MCF 10A (cell line): ENCODE measurements at regions of chr3 and their contacts with region 1.

Region 1: DNA sequence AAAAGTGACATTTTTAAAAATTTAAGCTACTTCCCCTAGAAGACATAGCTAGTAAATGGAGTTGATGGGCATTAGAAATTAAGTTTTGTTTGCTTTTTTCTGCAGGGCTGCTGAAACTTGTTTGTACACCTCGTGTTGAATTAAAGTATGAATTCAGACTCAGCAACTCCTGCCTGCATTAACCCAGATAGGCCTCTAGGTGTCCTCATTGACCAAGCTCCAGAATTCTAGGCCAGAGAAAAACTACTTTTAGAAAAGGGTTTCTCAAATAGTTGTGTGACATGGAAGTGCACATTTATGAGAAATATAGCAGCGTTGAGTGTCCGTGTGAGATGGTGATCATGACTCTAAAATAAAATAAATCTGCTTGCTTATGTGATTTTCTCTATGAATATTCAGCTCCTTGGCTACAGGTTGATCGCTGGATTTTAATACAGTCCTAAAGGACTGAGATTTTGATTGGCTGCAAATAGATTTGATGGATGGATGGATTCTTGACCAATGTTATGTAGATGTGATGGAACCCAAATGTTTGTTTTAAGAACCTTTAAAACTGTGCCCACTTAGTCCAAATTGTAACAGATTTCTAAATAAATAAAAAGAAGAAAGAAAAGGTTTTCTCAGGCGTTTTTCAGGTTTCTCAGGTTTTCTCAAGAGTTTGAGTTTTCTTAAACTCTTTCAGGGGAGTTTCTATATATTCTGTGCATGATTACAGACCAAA is 39.4 kb upstream of the LMOD3 start:
- DNase-seq: peak; percentile 65
- H3K4me3 Mint-ChIP-seq: no peak overlapping the region
- H3K27ac Mint-ChIP-seq: no peak overlapping the region
- H3K4me1 Mint-ChIP-seq: no peaks in the 10 kb centered on the region
- H3K27me3 Mint-ChIP-seq: no peaks in the 10 kb centered on the region
- CTCF ChIP-seq: peak; percentile 88

Region 2: DNA sequence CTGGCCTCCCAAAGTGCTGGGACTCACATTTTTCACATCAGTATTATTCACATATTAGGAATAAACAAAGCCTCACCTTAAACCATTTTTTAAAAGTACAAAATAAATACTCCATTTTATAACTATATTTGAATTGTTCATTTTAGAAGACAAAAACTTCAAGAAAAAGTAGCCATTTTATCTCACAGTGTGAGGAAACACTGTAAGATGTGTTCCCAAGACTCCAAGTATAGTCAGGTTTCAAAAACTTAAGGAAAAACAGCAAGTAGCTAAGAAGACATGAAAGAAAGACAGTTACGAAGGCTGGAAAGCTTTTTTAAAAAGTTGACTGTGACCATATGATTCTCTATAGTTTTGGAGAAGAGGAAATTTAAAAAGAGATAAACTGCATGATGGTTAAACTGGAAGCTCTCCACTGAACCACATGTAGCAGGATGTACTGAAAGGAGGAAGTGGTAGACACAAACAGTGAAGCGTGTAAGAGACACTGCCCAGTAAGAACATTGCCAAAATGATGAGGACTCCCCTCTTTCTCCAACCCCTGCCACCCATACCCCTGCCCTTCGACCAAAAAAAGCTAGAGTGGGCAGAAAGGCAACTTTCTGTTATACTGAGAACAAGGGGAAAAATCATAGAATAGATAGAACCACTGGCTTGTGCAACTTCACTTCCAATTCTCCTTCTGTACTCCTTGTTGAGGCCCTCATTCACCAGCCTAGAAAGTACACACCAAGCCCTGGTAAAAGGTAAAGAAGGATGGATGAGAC is 103.4 kb before region 1 on chr3:
- CTCF ChIA-PET with region 1: no interaction called
- POLR2A ChIA-PET with region 1: no interaction called
- intact Hi-C with region 1: no loop called
- DNase-seq: no peak
- H3K4me3 Mint-ChIP-seq: no peak overlapping the region
- H3K27ac Mint-ChIP-seq: no peak overlapping the region
- H3K4me1 Mint-ChIP-seq: no peaks in the 10 kb centered on the region
- H3K27me3 Mint-ChIP-seq: no peaks in the 10 kb centered on the region
- CTCF ChIP-seq: no peak

Region 3: DNA sequence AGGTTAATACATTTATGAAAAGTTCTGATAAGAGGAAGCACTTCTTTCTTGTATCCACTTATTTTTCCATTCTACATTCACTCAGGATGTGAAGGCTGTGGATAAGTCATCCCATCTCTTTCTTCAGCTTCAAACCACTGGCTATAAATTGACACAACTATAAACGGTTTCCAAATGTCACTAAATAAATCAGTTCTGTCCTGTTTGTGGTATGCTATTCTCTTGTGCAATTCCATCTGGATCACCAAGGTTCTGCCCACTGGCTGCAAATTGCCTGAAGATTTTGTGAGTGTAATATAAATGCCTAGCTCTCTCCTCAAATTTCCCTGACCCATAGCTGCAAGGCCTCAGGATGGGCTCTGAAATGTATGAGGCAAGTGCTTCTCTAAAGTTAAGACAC is 32.2 kb before region 1 on chr3:
- CTCF ChIA-PET with region 1: interaction called, 29 read pairs
- POLR2A ChIA-PET with region 1: no interaction called
- intact Hi-C with region 1: no loop called
- DNase-seq: no peak
- H3K4me3 Mint-ChIP-seq: no peak overlapping the region
- H3K27ac Mint-ChIP-seq: no peak overlapping the region
- H3K4me1 Mint-ChIP-seq: no peaks in the 10 kb centered on the region
- H3K27me3 Mint-ChIP-seq: no peaks in the 10 kb centered on the region
- CTCF ChIP-seq: no peak

Region 4: DNA sequence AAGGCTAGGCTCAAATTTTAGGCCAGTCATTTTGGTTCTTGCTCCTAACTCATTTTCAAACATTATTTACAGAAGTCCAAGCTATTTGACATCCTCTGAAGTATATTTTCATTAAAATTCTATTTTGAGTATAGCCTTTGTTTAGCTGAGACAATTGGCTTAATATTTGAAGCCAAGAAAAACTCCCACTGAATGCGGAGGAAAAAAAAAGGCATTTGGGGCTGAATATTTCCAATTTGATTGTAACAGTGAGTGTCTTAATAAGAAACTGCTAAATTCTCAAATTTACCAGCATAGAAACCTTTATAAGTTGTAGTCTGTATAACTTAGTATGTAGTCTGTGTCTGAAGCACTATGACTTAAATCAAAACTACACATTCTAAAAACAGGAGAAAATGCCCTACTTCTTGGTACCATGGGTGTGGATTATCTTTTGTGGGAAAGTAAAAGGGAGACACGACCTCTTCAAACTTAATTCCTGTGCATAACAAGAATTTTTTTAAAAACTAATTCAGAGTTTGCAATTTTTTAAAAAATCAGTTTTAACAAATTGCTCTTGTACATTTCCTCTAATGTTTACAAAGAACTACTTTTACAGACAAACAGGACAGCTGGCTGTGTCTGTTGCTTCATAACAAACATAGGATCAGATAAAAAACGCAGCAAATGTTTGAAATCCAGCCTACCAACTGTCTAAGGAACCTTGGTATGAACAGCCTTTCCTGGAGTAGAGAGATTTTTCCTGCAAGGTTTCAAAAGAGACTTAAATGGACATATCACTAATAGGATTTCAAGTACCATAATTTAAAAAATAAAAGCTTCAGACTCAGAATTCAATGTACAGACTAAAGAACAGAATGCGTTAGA is 13.4 kb after region 1 on chr3:
- CTCF ChIA-PET with region 1: interaction called, 42 read pairs
- POLR2A ChIA-PET with region 1: interaction called, 5 read pairs
- intact Hi-C with region 1: no loop called
- DNase-seq: no peak
- H3K4me3 Mint-ChIP-seq: no peak overlapping the region
- H3K27ac Mint-ChIP-seq: no peak overlapping the region
- H3K4me1 Mint-ChIP-seq: peaks cover 8% of the 10 kb centered on the region
- H3K27me3 Mint-ChIP-seq: no peaks in the 10 kb centered on the region
- CTCF ChIP-seq: no peak

Region 5: GRCh38 chr3:69200384-69201068 is 38.8 kb after region 1 on chr3:
- CTCF ChIA-PET with region 1: interaction called, 10 read pairs
- POLR2A ChIA-PET with region 1: interaction called, 5 read pairs
- intact Hi-C with region 1: no loop called
- DNase-seq: peak; percentile 92
- H3K4me3 Mint-ChIP-seq: peak overlapping the region; percentile 75
- H3K27ac Mint-ChIP-seq: peak overlapping the region; percentile 93
- H3K4me1 Mint-ChIP-seq: peaks cover 24% of the 10 kb centered on the region
- H3K27me3 Mint-ChIP-seq: no peaks in the 10 kb centered on the region
- CTCF ChIP-seq: no peak

Region 6: GRCh38 chr3:69294014-69294775 is 132.4 kb after region 1 on chr3:
- CTCF ChIA-PET with region 1: interaction called, 39 read pairs
- POLR2A ChIA-PET with region 1: interaction called, 3 read pairs
- intact Hi-C with region 1: no loop called
- DNase-seq: peak; percentile 72
- H3K4me3 Mint-ChIP-seq: no peak overlapping the region
- H3K27ac Mint-ChIP-seq: peak overlapping the region; percentile 86
- H3K4me1 Mint-ChIP-seq: peaks cover 13% of the 10 kb centered on the region
- H3K27me3 Mint-ChIP-seq: no peaks in the 10 kb centered on the region
- CTCF ChIP-seq: no peak

Region 7: DNA sequence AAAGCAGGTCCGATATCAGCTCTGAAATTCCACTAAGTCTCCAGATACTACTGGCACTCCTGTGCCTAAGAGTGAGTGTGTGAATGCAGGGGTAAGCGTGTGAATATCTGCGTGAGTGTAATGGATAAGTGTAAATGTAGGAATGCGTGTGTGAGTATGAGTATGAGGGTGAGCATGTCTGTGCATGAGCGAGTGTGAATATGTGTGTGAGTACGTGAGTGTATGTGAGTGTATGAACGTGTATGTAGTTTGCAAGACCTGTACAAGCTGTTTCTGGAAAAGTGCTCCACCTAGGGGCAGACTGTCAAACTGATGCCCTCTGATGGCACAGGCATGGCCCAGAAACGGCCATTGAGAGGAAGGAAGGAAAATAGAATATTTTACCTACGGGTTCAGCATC is 248.5 kb after region 1 on chr3:
- CTCF ChIA-PET with region 1: interaction called, 16 read pairs
- POLR2A ChIA-PET with region 1: no interaction called
- intact Hi-C with region 1: no loop called
- DNase-seq: peak; percentile 81
- H3K4me3 Mint-ChIP-seq: no peak overlapping the region
- H3K27ac Mint-ChIP-seq: no peak overlapping the region
- H3K4me1 Mint-ChIP-seq: peaks cover 13% of the 10 kb centered on the region
- H3K27me3 Mint-ChIP-seq: no peaks in the 10 kb centered on the region
- CTCF ChIP-seq: peak; percentile 66

Region 8: GRCh38 chr3:69948246-69948862 is 786.6 kb after region 1 on chr3:
- CTCF ChIA-PET with region 1: no interaction called
- POLR2A ChIA-PET with region 1: no interaction called
- intact Hi-C with region 1: loop called (anchors 5 kb)
- DNase-seq: peak; percentile 59
- H3K4me3 Mint-ChIP-seq: no peak overlapping the region
- H3K27ac Mint-ChIP-seq: no peak overlapping the region
- H3K4me1 Mint-ChIP-seq: no peaks in the 10 kb centered on the region
- H3K27me3 Mint-ChIP-seq: no peaks in the 10 kb centered on the region
- CTCF ChIP-seq: peak; percentile 58